K562 (cell line): ENCODE measurements at regions of chr1 and their contacts with region 1.

Region 1: DNA sequence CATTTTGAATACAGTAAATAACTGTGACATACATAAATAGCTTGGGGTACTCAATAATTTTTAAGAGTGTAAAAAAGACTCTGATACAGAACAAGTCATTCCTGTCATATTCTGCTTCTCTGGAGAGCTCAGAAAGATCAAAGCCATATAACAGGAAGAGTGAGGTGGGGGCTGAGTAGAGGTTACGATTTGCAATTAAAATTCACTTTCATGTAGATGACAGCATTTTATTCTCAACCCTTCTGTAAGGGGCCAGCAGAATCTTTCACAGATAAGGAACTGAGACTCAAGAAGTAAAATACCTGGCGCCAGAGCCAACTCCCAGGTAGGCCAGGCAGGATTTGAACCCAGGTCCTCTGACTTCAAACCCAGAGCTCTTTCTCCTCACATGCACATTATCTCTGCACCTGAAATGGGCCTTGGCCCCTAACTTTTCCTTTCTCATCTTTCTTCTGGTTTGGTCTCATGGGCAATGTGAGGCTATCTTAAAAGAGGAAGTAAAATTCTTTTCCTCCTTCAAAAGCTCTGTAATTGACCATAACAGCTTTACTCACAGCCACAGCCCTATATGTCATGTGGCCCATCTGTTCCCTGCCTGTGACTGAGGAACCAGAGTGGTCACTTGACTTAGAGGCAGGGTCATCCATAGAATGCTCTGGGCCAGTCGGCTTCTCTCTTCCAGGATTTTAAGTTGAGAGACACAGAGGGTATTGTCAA is 80.9 kb upstream of the SYT6 start:
- DNase-seq: no peak
- ATAC-seq: no peak
- H3K4me3 ChIP-seq: no peak overlapping the region
- H3K27ac ChIP-seq: no peak overlapping the region
- H3K4me1 ChIP-seq: no peaks in the 10 kb centered on the region
- H3K27me3 ChIP-seq: peaks cover 6 to 13% of the 10 kb centered on the region in 2 experiments; a peak in 3 of 5 replicates
- CTCF ChIP-seq: no peak
- EP300 ChIP-seq: no peak
- POLR2A ChIP-seq: no peak
- RAD21 ChIP-seq: no peak

Region 2: GRCh38 chr1:114282751-114283403 is 48.3 kb after region 1 on chr1:
- CTCF ChIA-PET with region 1: no interaction called
- POLR2A ChIA-PET with region 1: no interaction called
- in situ Hi-C with region 1: no loop called
- intact Hi-C with region 1: loop called (anchors 5 kb)
- DNase-seq: peak; percentile 89 to 93 (median 92)
- ATAC-seq: peak; percentile 100
- H3K4me3 ChIP-seq: no peak overlapping the region
- H3K27ac ChIP-seq: no peak overlapping the region
- H3K4me1 ChIP-seq: no peaks in the 10 kb centered on the region
- H3K27me3 ChIP-seq: peaks cover 8 to 13% of the 10 kb centered on the region in 2 experiments; a peak in 3 of 5 replicates
- CTCF ChIP-seq: peak; percentile 90 to 92 (median 90)
- EP300 ChIP-seq: no peak
- POLR2A ChIP-seq: no peak
- RAD21 ChIP-seq: peak; percentile 65 to 90